MCF 10A (cell line): ENCODE measurements at regions of chr1 and their contacts with region 1.

Region 1: GRCh38 chr1:52306227-52307006 is 59.6 kb downstream of the CC2D1B start:
- DNase-seq: no peak
- H3K4me3 Mint-ChIP-seq: no peak overlapping the region
- H3K27ac Mint-ChIP-seq: no peak overlapping the region
- H3K4me1 Mint-ChIP-seq: no peaks in the 10 kb centered on the region
- H3K27me3 Mint-ChIP-seq: no peaks in the 10 kb centered on the region
- CTCF ChIP-seq: no peak

Region 2: GRCh38 chr1:52056163-52056936 is 250.1 kb before region 1 on chr1 and contains the start of gene BTF3L4:
- CTCF ChIA-PET with region 1: no interaction called
- POLR2A ChIA-PET with region 1: no interaction called
- intact Hi-C with region 1: no loop called
- DNase-seq: peak; percentile 93
- H3K4me3 Mint-ChIP-seq: peak within 1 kb of the TSS; percentile 97
- H3K27ac Mint-ChIP-seq: peak within 1 kb of the TSS; percentile 99
- H3K4me1 Mint-ChIP-seq: peaks cover 29% of the 10 kb centered on the region
- H3K27me3 Mint-ChIP-seq: no peaks in the 10 kb centered on the region
- CTCF ChIP-seq: no peak
- total RNA-seq, gene BTF3L4: 76.0 and 77.0 TPM in 2 replicates

Region 3: DNA sequence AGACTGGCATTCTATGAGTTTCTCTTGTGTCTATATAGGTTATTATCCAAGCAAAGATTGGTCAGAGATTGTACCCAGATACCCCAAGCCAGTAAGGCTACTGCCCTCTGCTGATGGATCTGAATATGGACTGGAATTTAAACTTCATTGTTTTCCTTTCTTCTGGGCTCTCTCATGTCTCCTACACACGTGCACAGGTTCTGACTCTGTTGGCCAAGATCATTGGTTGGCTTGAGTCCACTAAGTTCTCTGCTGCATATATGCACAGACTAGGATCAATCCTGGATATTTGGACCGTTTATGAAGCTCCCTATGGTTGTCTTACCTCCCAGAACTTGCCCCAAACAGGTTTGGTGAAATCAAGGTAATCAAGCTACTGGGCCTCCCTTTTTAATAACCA is 10.1 kb before region 1 on chr1:
- CTCF ChIA-PET with region 1: interaction called, 21 read pairs
- POLR2A ChIA-PET with region 1: interaction called, 3 read pairs
- intact Hi-C with region 1: no loop called
- DNase-seq: peak; percentile 70
- H3K4me3 Mint-ChIP-seq: no peak overlapping the region
- H3K27ac Mint-ChIP-seq: no peak overlapping the region
- H3K4me1 Mint-ChIP-seq: no peaks in the 10 kb centered on the region
- H3K27me3 Mint-ChIP-seq: no peaks in the 10 kb centered on the region
- CTCF ChIP-seq: peak; percentile 62

Region 4: DNA sequence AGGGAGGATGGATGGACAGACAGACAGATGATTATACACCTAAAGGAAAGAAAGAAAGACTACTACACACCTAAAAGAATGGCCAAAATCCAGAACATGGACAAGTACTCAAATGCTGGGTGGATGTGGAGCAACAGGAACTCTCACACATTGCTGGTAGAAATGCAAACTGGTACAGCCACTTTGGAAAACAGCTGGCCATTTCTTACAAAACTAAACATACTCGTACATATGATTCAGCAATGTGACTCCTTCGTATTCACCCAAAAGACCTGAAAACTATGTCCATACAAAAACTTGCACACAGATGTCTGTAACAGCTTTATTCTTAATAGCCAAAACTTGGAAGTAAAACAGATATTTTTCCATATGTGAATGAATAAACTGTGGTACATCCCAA is 149.3 kb after region 1 on chr1:
- CTCF ChIA-PET with region 1: no interaction called
- POLR2A ChIA-PET with region 1: no interaction called
- intact Hi-C with region 1: no loop called
- DNase-seq: no peak
- H3K4me3 Mint-ChIP-seq: no peak overlapping the region
- H3K27ac Mint-ChIP-seq: no peak overlapping the region
- H3K4me1 Mint-ChIP-seq: peaks cover 6% of the 10 kb centered on the region
- H3K27me3 Mint-ChIP-seq: no peaks in the 10 kb centered on the region
- CTCF ChIP-seq: no peak

Region 5: GRCh38 chr1:52676249-52676903 is 370.0 kb after region 1 on chr1:
- CTCF ChIA-PET with region 1: no interaction called
- POLR2A ChIA-PET with region 1: no interaction called
- intact Hi-C with region 1: no loop called
- DNase-seq: no peak
- H3K4me3 Mint-ChIP-seq: no peak overlapping the region
- H3K27ac Mint-ChIP-seq: no peak overlapping the region
- H3K4me1 Mint-ChIP-seq: peaks cover 14% of the 10 kb centered on the region
- H3K27me3 Mint-ChIP-seq: no peaks in the 10 kb centered on the region
- CTCF ChIP-seq: no peak